ENCODE measurements at regions of chr4 and their contacts with region 1.

Region 1: DNA sequence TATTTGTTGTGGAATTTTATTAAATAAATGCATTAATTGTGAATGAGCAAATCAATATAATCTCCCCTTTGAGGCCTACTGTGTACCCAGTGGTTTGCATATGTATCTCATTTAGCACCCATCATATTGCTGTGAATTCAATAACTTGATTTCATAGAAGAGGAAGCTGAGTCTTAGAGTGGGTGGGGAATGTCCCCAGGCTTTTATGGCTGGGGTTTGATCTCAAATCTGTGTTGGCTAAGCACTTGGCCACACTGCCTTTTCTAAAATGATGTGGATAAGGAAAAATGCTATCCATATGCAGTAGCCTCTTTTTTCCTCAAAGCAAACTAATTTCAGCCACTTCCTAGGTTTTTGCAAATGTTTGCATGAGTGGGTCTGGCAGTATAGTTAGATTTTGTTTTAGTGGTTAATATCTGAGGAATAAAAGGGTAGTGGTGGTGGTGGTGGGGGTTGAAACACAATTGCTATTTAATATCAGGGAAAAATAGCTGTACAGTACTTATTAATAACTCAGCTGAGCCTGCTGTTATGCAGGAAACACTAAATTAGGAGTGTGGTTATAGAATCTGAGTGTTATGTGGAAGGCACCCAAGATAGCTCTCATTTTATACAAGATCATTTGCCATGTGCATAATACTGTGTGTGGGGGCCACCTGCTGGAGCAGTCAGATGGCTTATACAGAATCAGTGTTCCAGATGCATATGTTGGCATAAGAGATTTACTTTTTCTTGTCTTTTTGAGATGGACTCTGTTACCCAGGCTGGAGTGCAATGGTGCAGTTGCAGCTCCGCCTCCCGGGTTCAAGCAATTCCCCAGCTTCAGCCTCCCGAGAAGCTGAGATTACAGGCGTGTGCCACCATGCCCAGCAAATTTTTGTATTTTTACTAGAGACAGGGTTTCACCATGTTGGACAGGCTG is 108.0 kb downstream of the TMEM131L start:
- DNase-seq: peak; percentile 64
- ATAC-seq: peak; percentile 95
- H3K4me3 ChIP-seq: no peak overlapping the region
- H3K27ac ChIP-seq: no peak overlapping the region
- H3K4me1 ChIP-seq: peaks cover 5% of the 10 kb centered on the region; the same call in 1 of the 2 replicates
- H3K27me3 ChIP-seq: no peaks in the 10 kb centered on the region
- CTCF ChIP-seq: peak; percentile 73

Region 2: GRCh38 chr4:153142700-153143438 is 431.3 kb before region 1 on chr4:
- CTCF ChIA-PET with region 1: no interaction called
- POLR2A ChIA-PET with region 1: no interaction called
- intact Hi-C with region 1: loop called (anchors 1 kb)
- DNase-seq: peak; percentile 70
- ATAC-seq: peak; percentile 58
- H3K4me3 ChIP-seq: peak overlapping the region; percentile 1; the same call in 1 of the 2 replicates
- H3K27ac ChIP-seq: no peak overlapping the region
- H3K4me1 ChIP-seq: peaks cover 24% of the 10 kb centered on the region
- H3K27me3 ChIP-seq: no peaks in the 10 kb centered on the region
- CTCF ChIP-seq: peak; percentile 87

Region 3: DNA sequence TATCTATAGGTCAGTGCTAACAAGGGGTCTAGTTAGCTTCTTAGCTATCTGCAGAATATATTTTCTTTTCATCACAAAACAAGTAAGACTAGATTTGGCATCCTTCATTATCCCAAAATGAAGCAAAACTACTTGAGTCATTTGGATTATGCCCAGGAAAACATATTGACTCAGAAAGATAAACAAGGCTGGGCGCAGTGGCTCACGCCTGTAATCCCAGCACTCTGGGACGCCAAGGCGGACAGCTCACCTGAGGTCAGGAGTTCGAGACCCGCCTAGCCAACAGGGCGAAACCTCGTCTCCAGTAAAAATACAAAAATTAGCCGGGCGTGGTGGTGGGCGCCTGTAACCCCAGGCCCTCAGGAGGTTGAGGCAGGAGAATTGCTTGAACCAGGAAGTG is 247.6 kb before region 1 on chr4:
- CTCF ChIA-PET with region 1: no interaction called
- POLR2A ChIA-PET with region 1: interaction called, 10 read pairs
- intact Hi-C with region 1: no loop called
- DNase-seq: peak; percentile 86
- ATAC-seq: peak; percentile 51
- H3K4me3 ChIP-seq: no peak overlapping the region
- H3K27ac ChIP-seq: no peak overlapping the region
- H3K4me1 ChIP-seq: peaks cover 13% of the 10 kb centered on the region
- H3K27me3 ChIP-seq: no peaks in the 10 kb centered on the region
- CTCF ChIP-seq: no peak

Region 4: DNA sequence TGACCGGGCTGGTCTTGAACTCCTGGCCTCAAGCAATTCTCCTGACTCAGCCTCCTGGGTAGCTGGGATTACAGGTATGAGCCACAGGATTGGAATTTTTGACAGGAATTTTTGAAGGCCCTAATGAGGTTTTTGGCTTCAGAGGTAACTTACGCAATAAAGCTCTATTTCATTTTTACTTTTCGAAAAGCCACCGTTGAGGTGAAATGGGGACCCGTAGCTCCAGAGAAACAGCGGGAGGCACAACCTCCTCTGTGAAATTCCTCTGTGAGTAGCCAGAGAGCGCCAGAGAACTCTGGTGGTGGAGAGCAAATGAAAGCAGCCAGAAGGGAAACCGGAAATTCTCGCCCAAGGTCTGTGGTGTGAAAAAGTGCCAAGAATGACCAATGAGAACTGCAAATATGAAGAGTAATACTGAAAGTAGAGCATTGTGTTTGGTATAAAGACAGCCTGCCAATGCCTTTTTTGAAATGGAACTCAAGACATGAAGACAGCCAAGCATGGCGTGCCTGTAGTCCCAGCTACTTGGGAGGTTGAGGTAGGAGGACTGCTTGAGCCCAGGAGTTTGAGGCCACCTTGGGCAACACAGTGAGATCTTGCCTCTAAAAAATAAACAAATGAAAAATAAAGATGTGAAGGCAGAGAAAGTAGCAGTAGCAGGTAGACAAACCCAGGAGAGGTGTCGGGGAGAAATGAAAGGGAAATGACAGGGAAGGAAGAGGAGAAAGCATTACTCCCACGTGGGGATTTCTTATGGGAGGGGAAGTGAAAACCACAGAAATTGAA is 141.0 kb before region 1 on chr4:
- CTCF ChIA-PET with region 1: interaction called, 7 read pairs
- POLR2A ChIA-PET with region 1: no interaction called
- intact Hi-C with region 1: loop called (anchors 1 kb)
- DNase-seq: peak; percentile 91
- ATAC-seq: peak; percentile 91
- H3K4me3 ChIP-seq: no peak overlapping the region
- H3K27ac ChIP-seq: peak overlapping the region; percentile 51
- H3K4me1 ChIP-seq: peaks cover 7% of the 10 kb centered on the region
- H3K27me3 ChIP-seq: no peaks in the 10 kb centered on the region
- CTCF ChIP-seq: peak; percentile 85

Region 5: DNA sequence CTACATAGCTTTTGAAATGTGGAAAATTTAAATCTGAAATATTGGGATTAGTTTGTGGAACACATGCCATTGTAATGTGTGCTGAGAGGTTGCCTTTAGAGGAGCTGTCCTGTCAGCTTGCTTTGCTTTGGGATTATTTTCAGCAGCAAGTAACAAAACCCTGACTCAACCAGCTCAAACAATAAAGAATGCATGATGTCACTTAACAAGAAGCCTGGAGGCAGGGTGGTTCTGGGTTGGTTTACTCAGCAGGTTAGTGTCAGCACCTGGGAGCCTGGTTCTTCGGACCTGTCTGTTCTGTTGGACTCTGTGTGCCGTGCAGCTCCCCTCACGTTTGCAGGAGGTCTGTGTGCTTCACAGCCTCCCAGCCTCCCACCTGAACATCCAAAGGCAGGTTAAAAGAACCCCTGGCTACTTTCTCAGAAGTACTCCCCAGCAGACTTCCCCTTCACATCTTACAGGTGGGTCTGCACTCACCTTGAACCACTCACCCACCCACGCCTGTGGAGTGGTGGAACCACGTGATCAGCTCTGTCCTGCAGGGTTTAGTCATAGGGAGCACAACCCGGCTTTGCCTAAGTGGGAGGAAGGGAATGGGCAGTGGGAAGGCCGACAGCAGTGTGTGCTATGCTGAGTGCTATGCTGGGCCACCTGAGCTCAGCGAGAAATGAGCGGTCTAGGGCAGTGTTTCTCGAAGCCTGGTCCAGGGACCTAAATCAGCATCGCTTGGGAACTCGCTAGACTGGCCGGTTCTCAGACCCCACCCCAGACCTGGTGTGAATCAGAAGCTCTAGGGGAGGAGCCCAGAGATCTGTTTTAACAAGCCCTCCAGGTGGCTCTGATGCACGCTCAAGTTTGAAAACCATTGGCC is 87.6 kb before region 1 on chr4:
- CTCF ChIA-PET with region 1: interaction called, 16 read pairs
- POLR2A ChIA-PET with region 1: no interaction called
- intact Hi-C with region 1: no loop called
- DNase-seq: peak; percentile 93
- ATAC-seq: peak; percentile 80
- H3K4me3 ChIP-seq: peak overlapping the region; percentile 61
- H3K27ac ChIP-seq: peak overlapping the region; percentile 99
- H3K4me1 ChIP-seq: peaks cover 54% of the 10 kb centered on the region
- H3K27me3 ChIP-seq: no peaks in the 10 kb centered on the region
- CTCF ChIP-seq: no peak

Region 6: GRCh38 chr4:153521999-153522801 is 51.9 kb before region 1 on chr4:
- CTCF ChIA-PET with region 1: no interaction called
- POLR2A ChIA-PET with region 1: no interaction called
- intact Hi-C with region 1: no loop called
- DNase-seq: no peak
- ATAC-seq: no peak
- H3K4me3 ChIP-seq: no peak overlapping the region
- H3K27ac ChIP-seq: no peak overlapping the region
- H3K4me1 ChIP-seq: no peaks in the 10 kb centered on the region
- H3K27me3 ChIP-seq: no peaks in the 10 kb centered on the region
- CTCF ChIP-seq: no peak

Region 7: GRCh38 chr4:153750197-153750817 is 176.2 kb after region 1 on chr4:
- CTCF ChIA-PET with region 1: no interaction called
- POLR2A ChIA-PET with region 1: no interaction called
- intact Hi-C with region 1: loop called (anchors 5 kb)
- DNase-seq: peak; percentile 77
- ATAC-seq: peak; percentile 88
- H3K4me3 ChIP-seq: no peak overlapping the region
- H3K27ac ChIP-seq: no peak overlapping the region
- H3K4me1 ChIP-seq: peaks cover 7% of the 10 kb centered on the region; the same call in 1 of the 2 replicates
- H3K27me3 ChIP-seq: no peaks in the 10 kb centered on the region
- CTCF ChIP-seq: peak; percentile 72

Measured in PC-3 (cell line).